Panc1 (cell line): ENCODE measurements at regions of chr4 and their contacts with region 1.

Region 1: DNA sequence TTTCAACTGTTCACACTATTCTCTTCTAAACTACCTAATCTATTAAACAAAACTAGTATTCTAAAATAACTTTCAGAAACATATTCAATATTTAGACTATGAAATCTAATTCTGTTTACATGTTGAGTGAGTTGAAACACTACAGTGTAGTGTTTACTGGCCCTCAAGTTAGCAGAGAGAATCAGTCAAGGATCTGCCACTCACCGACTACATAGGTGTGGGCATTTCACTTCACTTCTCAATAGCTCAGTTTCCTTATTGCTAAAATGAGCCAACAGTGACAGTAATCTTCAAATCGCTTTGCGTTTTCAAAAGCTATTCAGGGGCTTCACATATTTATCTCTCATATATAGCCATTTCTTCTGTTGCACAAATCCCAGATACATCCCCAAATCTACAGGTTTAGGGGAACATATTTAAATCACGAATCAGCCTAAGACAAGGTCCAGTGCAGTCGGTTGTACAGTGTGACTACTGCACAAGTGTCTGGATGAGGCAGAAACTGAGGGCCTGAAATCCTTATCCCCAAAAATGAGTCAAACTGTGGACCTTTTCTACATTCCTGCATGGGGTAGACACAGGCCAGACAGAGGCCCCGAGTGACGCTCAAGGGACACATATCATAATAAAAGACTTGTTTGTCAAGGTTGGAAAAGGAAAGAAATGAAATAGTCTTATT is 129.8 kb downstream of the PPP3CA start:
- DNase-seq: no peak
- ATAC-seq: no peak
- H3K4me3 ChIP-seq: no peak overlapping the region
- H3K27ac ChIP-seq: no peak overlapping the region
- H3K4me1 ChIP-seq: no peaks in the 10 kb centered on the region; the same call in 1 of the 2 replicates
- H3K27me3 ChIP-seq: no peaks in the 10 kb centered on the region
- CTCF ChIP-seq: no peak

Region 2: GRCh38 chr4:101205916-101206315 is 11.6 kb before region 1 on chr4:
- CTCF ChIA-PET with region 1: no interaction called
- POLR2A ChIA-PET with region 1: no interaction called
- in situ Hi-C with region 1: no loop called
- intact Hi-C with region 1: no loop called
- DNase-seq: no peak
- ATAC-seq: no peak
- H3K4me3 ChIP-seq: no peak overlapping the region
- H3K27ac ChIP-seq: no peak overlapping the region
- H3K4me1 ChIP-seq: no peaks in the 10 kb centered on the region; the same call in 1 of the 2 replicates
- H3K27me3 ChIP-seq: no peaks in the 10 kb centered on the region
- CTCF ChIP-seq: no peak

Region 3: DNA sequence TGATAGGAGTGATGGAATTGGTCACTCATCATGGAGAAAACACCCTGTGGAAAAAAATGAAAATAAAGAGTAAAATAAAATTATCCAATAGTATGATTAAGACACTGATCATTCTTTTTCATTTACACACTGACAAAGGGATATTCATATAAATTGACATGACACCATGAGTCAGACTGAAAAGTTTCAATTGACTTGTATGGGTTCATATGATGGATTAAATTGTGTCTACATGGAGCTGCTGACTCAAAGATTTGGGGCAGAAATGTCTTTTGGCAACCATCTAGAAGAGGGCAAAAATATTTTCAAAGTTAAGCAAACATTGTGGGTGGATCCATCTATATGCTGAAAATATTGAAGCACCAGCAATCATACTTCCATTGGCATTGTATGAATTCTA is 283.2 kb after region 1 on chr4:
- CTCF ChIA-PET with region 1: no interaction called
- POLR2A ChIA-PET with region 1: interaction called, 10 read pairs
- in situ Hi-C with region 1: no loop called
- intact Hi-C with region 1: no loop called
- DNase-seq: no peak
- ATAC-seq: no peak
- H3K4me3 ChIP-seq: no peak overlapping the region
- H3K27ac ChIP-seq: no peak overlapping the region
- H3K4me1 ChIP-seq: no peaks in the 10 kb centered on the region
- H3K27me3 ChIP-seq: no peaks in the 10 kb centered on the region
- CTCF ChIP-seq: no peak